ENCODE measurements at regions of chr12 and their contacts with region 1.

Region 1: DNA sequence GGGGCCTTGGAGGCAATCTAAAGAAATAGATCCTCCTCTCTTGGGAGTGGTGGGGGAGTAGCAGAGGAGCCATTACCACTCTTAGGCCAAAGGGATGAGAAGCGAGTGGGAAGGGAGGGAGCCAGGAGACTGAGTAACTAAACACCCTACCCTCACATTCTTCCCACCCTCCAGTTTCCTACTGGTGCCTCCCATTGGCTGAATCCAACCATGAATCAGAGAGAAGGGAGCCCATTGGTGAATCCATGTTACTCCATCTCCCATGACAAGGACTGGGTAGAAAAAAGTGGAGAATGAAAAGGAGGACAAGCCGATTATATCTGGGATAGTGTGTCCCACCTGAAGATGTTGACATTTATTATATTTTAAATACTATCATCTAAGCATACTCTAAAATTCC is 76.8 kb upstream of the LHX5 start:
- DNase-seq: no peak
- H3K4me3 ChIP-seq: no peak overlapping the region
- CTCF ChIP-seq: no peak
- POLR2A ChIP-seq: no peak

Region 2: GRCh38 chr12:113528606-113529293 is 19.7 kb before region 1 on chr12:
- intact Hi-C with region 1: no loop called
- DNase-seq: no peak
- H3K4me3 ChIP-seq: no peak overlapping the region
- CTCF ChIP-seq: no peak
- POLR2A ChIP-seq: no peak

Region 3: GRCh38 chr12:113571713-113572112 is 23.2 kb after region 1 on chr12:
- intact Hi-C with region 1: loop called (anchors 1 kb)
- DNase-seq: no peak
- H3K4me3 ChIP-seq: no peak overlapping the region
- CTCF ChIP-seq: no peak
- POLR2A ChIP-seq: no peak

Region 4: DNA sequence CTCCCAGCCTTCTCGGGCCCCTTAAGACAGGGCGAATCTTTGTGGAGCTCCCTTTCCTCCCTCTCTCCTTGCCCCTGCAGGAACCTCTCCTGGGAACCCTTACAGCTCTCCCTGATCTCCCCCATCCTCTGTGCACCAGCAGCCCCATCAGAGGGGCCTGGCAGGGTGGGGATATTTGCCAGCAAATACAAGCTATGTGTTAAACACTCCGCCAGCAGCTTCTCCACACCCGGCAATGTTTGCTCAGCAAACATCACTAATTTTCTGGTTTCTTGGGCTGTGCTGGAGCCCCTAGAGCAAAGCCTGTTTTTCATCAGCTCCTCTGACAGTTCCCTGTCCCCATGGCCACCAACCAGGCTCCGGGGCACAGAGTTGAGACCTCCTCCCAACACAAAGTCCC is 70.7 kb after region 1 on chr12:
- intact Hi-C with region 1: no loop called
- DNase-seq: no peak
- H3K4me3 ChIP-seq: no peak overlapping the region
- CTCF ChIP-seq: no peak
- POLR2A ChIP-seq: no peak

Region 5: GRCh38 chr12:113815031-113815430 is 266.6 kb after region 1 on chr12:
- intact Hi-C with region 1: no loop called
- DNase-seq: no peak
- H3K4me3 ChIP-seq: no peak overlapping the region
- CTCF ChIP-seq: no peak
- POLR2A ChIP-seq: no peak